ENCODE measurements at regions of chr6 and their contacts with region 1.

Region 1: GRCh38 chr6:118893807-118894424 is at the start of gene ASF1A:
- DNase-seq: peak; percentile 98
- H3K4me3 Mint-ChIP-seq: peak within 1 kb of the TSS; percentile 88
- H3K27ac Mint-ChIP-seq: peak within 1 kb of the TSS; percentile 97
- H3K4me1 Mint-ChIP-seq: peaks cover 50% of the 10 kb centered on the region
- H3K27me3 Mint-ChIP-seq: no peaks in the 10 kb centered on the region
- total RNA-seq, gene ASF1A: 30.3 to 31.4 TPM

Region 2: GRCh38 chr6:118187568-118188164 is 706.2 kb before region 1 on chr6:
- CTCF ChIA-PET with region 1: no interaction called
- intact Hi-C with region 1: loop called (anchors 5 kb)
- DNase-seq: peak; percentile 53
- H3K4me3 Mint-ChIP-seq: peak overlapping the region; percentile 5
- H3K27ac Mint-ChIP-seq: peak overlapping the region; percentile 82
- H3K4me1 Mint-ChIP-seq: peaks cover 32% of the 10 kb centered on the region
- H3K27me3 Mint-ChIP-seq: no peaks in the 10 kb centered on the region

Region 3: GRCh38 chr6:118651282-118652050 is 242.4 kb before region 1 on chr6 and contains the start of gene CEP85L:
- CTCF ChIA-PET with region 1: interaction called, 3 read pairs
- intact Hi-C with region 1: loop called (anchors 1 kb)
- DNase-seq: peak; percentile 90
- H3K4me3 Mint-ChIP-seq: peak within 1 kb of the TSS; percentile 86
- H3K27ac Mint-ChIP-seq: peak within 1 kb of the TSS; percentile 89
- H3K4me1 Mint-ChIP-seq: peaks cover 49% of the 10 kb centered on the region
- H3K27me3 Mint-ChIP-seq: no peaks in the 10 kb centered on the region
- total RNA-seq, gene CEP85L: 31.4 to 31.9 TPM

Region 4: GRCh38 chr6:118800394-118801071 is 93.4 kb before region 1 on chr6:
- CTCF ChIA-PET with region 1: interaction called, 15 read pairs
- intact Hi-C with region 1: no loop called
- DNase-seq: peak; percentile 95
- H3K4me3 Mint-ChIP-seq: peak overlapping the region; percentile 54
- H3K27ac Mint-ChIP-seq: peak overlapping the region; percentile 46
- H3K4me1 Mint-ChIP-seq: peaks cover 30% of the 10 kb centered on the region
- H3K27me3 Mint-ChIP-seq: no peaks in the 10 kb centered on the region

Region 5: GRCh38 chr6:118881440-118882313 is 12.2 kb before region 1 on chr6:
- CTCF ChIA-PET with region 1: interaction called, 20 read pairs
- intact Hi-C with region 1: loop called (anchors 1 kb)
- DNase-seq: no peak
- H3K4me3 Mint-ChIP-seq: no peak overlapping the region
- H3K27ac Mint-ChIP-seq: no peak overlapping the region
- H3K4me1 Mint-ChIP-seq: peaks cover 73% of the 10 kb centered on the region
- H3K27me3 Mint-ChIP-seq: no peaks in the 10 kb centered on the region

Region 6: GRCh38 chr6:118952683-118953082 is 58.8 kb after region 1 on chr6:
- CTCF ChIA-PET with region 1: no interaction called
- intact Hi-C with region 1: no loop called
- DNase-seq: no peak
- H3K4me3 Mint-ChIP-seq: no peak overlapping the region
- H3K27ac Mint-ChIP-seq: no peak overlapping the region
- H3K4me1 Mint-ChIP-seq: no peaks in the 10 kb centered on the region
- H3K27me3 Mint-ChIP-seq: no peaks in the 10 kb centered on the region

Region 7: DNA sequence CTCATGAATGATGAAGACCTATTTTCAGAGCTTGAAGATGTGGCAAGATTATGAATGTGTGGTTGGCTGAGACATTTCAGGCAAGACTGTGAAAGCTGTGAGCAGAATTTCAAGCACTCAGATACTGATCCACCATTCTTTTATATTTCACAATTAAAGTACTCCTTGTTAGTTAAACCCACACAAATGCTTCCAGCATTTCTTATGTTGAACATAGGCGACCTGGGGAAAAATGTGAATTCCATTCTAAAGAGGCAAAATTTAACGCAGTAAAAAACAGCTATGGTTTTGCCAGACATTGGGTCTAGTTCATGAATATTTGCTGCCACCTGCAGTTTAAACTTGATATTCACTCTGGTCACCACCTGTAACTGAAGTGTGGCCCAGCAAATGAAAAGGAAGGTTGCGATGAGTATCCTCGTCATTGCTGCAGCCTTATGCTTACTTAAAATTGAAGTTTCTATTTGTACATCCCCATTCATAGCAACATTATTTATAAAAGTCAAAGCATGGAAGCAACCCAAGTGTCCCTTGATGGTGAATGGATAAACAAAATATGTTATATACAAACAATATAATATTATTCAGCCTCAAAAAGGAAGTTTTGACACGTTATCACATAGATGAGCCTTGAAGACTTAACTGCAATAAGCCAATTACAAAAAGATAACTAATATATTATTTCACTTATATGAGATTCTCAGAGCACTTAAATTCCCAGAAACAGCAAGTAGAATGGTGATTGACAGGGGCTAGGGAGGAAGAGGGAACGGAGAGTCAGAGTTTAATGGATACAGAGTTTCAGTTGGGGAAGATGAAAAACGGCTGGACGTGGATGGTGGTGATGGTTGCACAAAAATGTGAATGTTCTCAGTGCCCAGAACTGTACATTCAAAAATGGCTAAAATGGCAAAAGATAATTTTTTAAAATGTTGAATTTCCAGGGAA is 217.0 kb after region 1 on chr6:
- CTCF ChIA-PET with region 1: interaction called, 10 read pairs
- intact Hi-C with region 1: loop called (anchors 1 kb)
- DNase-seq: peak; percentile 62
- H3K4me3 Mint-ChIP-seq: no peak overlapping the region
- H3K27ac Mint-ChIP-seq: no peak overlapping the region
- H3K4me1 Mint-ChIP-seq: peaks cover 22% of the 10 kb centered on the region
- H3K27me3 Mint-ChIP-seq: no peaks in the 10 kb centered on the region

Region 8: GRCh38 chr6:119683015-119683414 is 789.1 kb after region 1 on chr6:
- CTCF ChIA-PET with region 1: no interaction called
- intact Hi-C with region 1: no loop called
- DNase-seq: no peak
- H3K4me3 Mint-ChIP-seq: no peak overlapping the region
- H3K27ac Mint-ChIP-seq: no peak overlapping the region
- H3K4me1 Mint-ChIP-seq: no peaks in the 10 kb centered on the region
- H3K27me3 Mint-ChIP-seq: no peaks in the 10 kb centered on the region